ENCODE measurements at regions of chr19 and their contacts with region 1.

Region 1: DNA sequence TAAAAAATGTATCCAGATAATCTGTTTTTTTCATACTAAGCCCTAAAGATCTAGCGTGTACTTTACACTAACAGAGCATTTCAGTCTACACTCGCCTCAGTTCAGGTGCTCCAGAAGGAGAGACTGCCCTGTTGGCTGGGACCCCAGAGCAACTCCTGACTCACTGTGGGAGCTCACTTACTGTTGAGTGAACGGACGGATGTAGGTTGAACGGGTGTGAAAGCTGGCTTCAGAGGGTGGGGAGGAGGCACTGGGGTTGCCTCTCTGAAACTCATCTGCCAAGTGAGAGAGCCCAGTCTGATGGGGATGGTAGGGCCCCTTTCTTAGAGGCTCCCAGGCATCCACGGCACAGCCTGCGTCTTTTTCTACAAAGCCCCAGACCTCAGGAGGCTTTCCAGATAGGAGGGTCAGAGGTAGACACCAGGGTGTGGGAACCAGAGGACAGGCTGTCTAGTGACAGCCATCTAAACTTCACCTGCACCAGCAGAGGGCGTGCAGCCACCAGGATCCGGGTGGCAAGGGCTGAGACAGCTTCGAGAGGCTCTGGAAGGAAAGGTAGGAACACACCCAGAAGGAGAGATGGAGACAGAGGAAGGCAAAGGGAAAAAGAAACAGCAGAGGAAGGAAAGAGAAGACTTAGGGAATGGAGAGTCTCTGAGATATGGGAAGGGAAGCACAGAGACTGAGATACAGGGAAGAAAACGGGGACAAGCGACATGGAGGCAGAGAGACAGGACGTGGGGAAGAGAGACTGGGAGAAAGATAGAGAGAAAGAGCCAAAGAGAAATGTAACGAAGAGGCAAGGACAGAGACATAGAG is 3.7 kb downstream of the KASH5 start:
- DNase-seq: peak; percentile 68 to 81
- H3K4me3 ChIP-seq: no peak overlapping the region
- H3K27ac ChIP-seq: no peak overlapping the region
- H3K4me1 ChIP-seq: no peaks in the 10 kb centered on the region
- H3K27me3 ChIP-seq: peaks cover 0 to 62% of the 10 kb centered on the region in 2 donors
- CTCF ChIP-seq: peak; percentile 73

Region 2: DNA sequence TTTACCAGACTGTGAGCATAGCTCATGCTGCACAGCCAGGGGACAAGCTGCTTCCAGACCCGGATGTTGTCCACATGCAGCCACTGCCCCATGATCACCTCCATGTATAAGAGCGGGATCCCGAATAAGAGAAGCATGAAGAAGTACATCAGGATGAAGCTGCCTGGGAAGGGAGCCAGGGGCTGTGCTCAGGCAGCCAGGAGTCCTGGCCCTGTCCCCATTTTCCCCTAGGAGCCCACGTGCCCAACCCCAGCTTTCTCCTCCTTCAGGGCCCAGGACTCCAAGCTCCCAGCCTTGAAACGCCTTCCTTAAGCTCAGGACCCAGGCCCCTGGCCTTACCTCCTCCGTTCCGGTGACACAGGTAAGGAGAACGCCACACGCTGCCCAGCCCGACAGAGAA is 136.1 kb before region 1 on chr19:
- intact Hi-C with region 1: no loop called
- DNase-seq: no peak
- H3K4me3 ChIP-seq: no peak overlapping the region
- H3K27ac ChIP-seq: no peak overlapping the region
- H3K4me1 ChIP-seq: no peaks in the 10 kb centered on the region
- H3K27me3 ChIP-seq: peaks cover 0 to 3% of the 10 kb centered on the region in 2 donors
- CTCF ChIP-seq: no peak

Region 3: DNA sequence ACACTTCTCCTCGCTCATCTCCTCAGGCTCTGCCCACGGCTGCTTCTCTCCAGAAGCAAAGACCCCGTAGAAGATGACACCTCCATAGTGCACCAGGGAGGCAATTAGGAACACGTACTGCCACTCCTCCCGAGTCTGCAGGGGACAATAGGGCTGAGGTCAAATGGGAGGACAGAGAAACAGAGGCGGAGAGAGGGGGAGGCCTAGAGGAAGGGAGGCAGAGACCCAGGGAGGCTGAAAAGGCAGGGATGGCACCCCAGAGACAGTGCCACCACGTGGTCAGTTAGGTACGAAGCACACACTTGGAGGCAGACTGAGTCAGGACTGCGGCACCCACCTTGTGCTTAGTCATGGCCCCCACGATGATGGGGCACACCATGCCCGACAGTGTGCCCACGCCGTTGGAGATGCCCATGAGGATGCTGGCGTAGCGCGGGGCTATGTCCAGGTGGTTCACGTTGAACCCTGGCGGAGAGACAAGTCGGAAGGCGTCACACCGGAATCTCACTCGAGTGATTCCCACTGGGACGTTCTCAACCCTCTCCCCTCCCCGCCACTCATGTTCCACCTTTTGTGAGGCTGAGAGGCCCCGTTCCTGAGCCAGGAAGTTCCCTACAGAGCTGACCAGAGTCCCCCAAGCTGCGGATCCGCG is 39.0 kb after region 1 on chr19:
- intact Hi-C with region 1: loop called (anchors 5 kb)
- DNase-seq: no peak
- H3K4me3 ChIP-seq: no peak overlapping the region
- H3K27ac ChIP-seq: no peak overlapping the region
- H3K4me1 ChIP-seq: peaks cover 0 to 22% (median 8%) of the 10 kb centered on the region in 4 donors
- H3K27me3 ChIP-seq: peaks cover 0 to 100% of the 10 kb centered on the region in 2 donors
- CTCF ChIP-seq: no peak

Region 4: GRCh38 chr19:49443366-49444099 is 51.7 kb after region 1 on chr19:
- intact Hi-C with region 1: loop called (anchors 2 kb)
- DNase-seq: peak; percentile 96 to 97
- H3K4me3 ChIP-seq: peak overlapping the region; percentile 57 to 80
- H3K27ac ChIP-seq: peak overlapping the region; percentile 74 to 77
- H3K4me1 ChIP-seq: peaks cover 0 to 21% (median 10%) of the 10 kb centered on the region in 4 donors
- H3K27me3 ChIP-seq: peaks cover 0 to 40% of the 10 kb centered on the region in 2 donors
- CTCF ChIP-seq: peak; percentile 77 to 85

Measured in tibial artery (tissue), 4 donors.